Stomach (tissue), 19 donors: ENCODE measurements at regions of chr4 and their contacts with region 1.

Region 1: DNA sequence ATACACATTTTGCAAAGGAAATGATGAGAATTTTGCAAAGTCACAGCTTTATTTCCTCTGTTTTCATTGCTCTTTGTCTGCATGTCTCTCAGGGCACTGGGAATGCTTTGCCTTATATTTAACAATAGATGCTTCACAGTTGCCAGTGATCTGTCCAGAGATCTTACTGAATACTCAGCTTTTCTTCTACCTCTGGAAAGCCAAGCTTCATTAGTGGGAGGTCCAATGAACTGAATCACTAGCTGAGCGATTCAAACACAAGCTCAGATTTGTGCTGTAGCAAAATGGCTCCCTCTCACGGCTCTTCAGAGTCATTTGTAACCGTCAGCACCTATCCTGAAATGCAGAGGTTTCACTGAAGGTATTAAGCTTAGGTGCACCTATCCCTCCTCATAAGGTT is 138.9 kb downstream of the DCLK2 start:
- DNase-seq: peak in 1 of 2 donors; percentile 63
- H3K4me3 ChIP-seq: no peak overlapping the region
- H3K27ac ChIP-seq: no peak overlapping the region
- H3K4me1 ChIP-seq: peaks cover 0 to 13% (median 5%) of the 10 kb centered on the region in 4 donors
- H3K27me3 ChIP-seq: no peaks in the 10 kb centered on the region
- CTCF ChIP-seq: no peak
- EP300 ChIP-seq: no peak
- POLR2A ChIP-seq: no peak

Region 2: GRCh38 chr4:150010525-150011126 is 206.6 kb before region 1 on chr4:
- intact Hi-C with region 1: loop called (anchors 10 kb)
- DNase-seq: peak; percentile 26 to 82
- H3K4me3 ChIP-seq: no peak overlapping the region
- H3K27ac ChIP-seq: no peak overlapping the region
- H3K4me1 ChIP-seq: peaks cover 0 to 21% (median 8%) of the 10 kb centered on the region in 4 donors
- H3K27me3 ChIP-seq: no peaks in the 10 kb centered on the region
- CTCF ChIP-seq: peak in 4 of 7 experiments; percentile 38 to 72 (median 51)
- EP300 ChIP-seq: no peak
- POLR2A ChIP-seq: no peak

Region 3: GRCh38 chr4:150045410-150045809 is 171.8 kb before region 1 on chr4:
- intact Hi-C with region 1: no loop called
- DNase-seq: no peak
- H3K4me3 ChIP-seq: no peak overlapping the region
- H3K27ac ChIP-seq: no peak overlapping the region
- H3K4me1 ChIP-seq: no peaks in the 10 kb centered on the region
- H3K27me3 ChIP-seq: no peaks in the 10 kb centered on the region
- CTCF ChIP-seq: no peak
- EP300 ChIP-seq: no peak
- POLR2A ChIP-seq: no peak